Activated CD4-positive, alpha-beta T cell treated with anti-CD3 and anti-CD28 coated beads, Interleukin-2, amount 10 ng/mL, durations not matched to agents 24 days and 14 days (primary cell): ENCODE measurements at regions of chr6 and their contacts with region 1.

Region 1: GRCh38 chr6:75284632-75285286 is at the start of gene TMEM30A:
- DNase-seq: peak; percentile 99
- H3K4me3 Mint-ChIP-seq: no peak within 1 kb of the TSS
- H3K27ac Mint-ChIP-seq: no peak within 1 kb of the TSS
- H3K4me1 Mint-ChIP-seq: peaks cover 29% of the 10 kb centered on the region
- H3K27me3 Mint-ChIP-seq: no peaks in the 10 kb centered on the region
- total RNA-seq, gene TMEM30A: 57.0 and 60.5 TPM in 2 replicates

Region 2: GRCh38 chr6:73580247-73581149 is 1704.3 kb before region 1 on chr6:
- intact Hi-C with region 1: loop called (anchors 5 kb)
- DNase-seq: peak; percentile 87
- H3K4me3 Mint-ChIP-seq: peak overlapping the region; percentile 71
- H3K27ac Mint-ChIP-seq: peak overlapping the region; percentile 99
- H3K4me1 Mint-ChIP-seq: peaks cover 19% of the 10 kb centered on the region
- H3K27me3 Mint-ChIP-seq: no peaks in the 10 kb centered on the region

Region 3: DNA sequence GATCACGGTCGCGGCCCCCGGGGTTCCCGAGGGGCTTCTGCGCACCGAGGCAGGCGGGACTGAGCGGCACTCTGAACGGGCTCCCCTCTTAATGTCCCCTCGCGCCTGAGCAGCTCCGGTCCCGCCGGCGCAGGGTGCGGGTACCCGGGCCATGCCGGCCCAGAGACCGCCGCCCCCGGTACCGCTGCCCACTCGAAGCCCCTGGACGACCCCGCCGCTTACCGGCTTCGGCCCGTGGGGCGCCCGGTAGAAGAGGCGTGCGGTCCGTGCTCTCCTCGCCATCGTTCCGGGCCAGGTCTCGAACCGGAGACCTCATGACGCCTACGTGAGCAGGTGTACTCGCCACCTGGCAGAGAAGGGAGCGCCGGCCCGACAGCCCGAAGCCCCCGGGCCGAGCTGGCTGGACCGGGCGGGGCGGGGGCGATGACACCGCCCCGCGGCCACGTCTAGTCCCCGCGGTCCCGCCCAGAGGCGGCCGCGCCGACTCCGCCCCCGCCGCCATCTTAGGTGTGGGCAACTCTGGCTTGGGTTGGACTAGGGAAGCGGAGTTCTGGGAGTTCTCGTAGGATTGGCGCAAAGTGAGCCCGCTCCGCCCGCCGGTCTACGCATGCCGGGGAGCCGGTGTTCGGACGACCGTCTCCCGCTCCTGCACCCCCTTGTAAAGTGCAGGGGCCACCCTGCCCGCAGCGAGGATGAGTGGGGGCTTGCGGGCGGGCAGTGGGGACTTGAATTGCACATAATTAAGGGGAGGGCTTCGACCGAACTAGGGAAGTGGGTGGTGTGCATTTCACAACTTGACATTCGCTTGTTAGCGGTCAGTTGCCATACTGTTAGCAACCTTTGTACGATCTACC is 1631.0 kb before region 1 on chr6 and contains the start of gene SLC17A5:
- intact Hi-C with region 1: loop called (anchors 5 kb)
- DNase-seq: peak; percentile 96
- H3K4me3 Mint-ChIP-seq: peak within 1 kb of the TSS; percentile 96
- H3K27ac Mint-ChIP-seq: peak within 1 kb of the TSS; percentile 97
- H3K4me1 Mint-ChIP-seq: peaks cover 25% of the 10 kb centered on the region
- H3K27me3 Mint-ChIP-seq: no peaks in the 10 kb centered on the region
- total RNA-seq, gene SLC17A5: 4.9 TPM in 2 replicates

Region 4: DNA sequence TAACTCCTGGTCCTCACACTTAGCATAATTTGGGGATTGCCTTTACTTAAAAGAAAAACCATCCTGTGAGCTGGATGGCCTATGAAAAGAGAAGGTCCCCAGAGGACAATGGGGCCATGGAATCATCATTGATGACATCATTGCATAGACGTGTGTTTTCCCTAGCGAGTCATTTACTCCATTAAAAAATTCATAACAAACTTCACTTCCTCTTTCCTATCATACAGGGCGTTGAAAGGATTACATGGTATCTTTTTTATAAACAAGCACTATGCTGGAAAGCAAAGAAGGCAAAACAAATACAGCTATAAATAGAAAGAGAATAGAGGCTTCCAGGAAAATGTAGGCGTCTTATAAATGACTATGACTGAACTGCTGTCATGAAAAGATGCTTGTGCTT is 67.6 kb before region 1 on chr6:
- intact Hi-C with region 1: no loop called
- DNase-seq: no peak
- H3K4me3 Mint-ChIP-seq: peak overlapping the region; percentile 10
- H3K27ac Mint-ChIP-seq: peak overlapping the region; percentile 72
- H3K4me1 Mint-ChIP-seq: peaks cover 16% of the 10 kb centered on the region
- H3K27me3 Mint-ChIP-seq: peaks cover 19% of the 10 kb centered on the region

Region 5: GRCh38 chr6:75243333-75244062 is 41.3 kb before region 1 on chr6 and contains the start of gene COX7A2:
- intact Hi-C with region 1: loop called (anchors 1 kb)
- DNase-seq: peak; percentile 96
- H3K4me3 Mint-ChIP-seq: peak within 1 kb of the TSS; percentile 94
- H3K27ac Mint-ChIP-seq: peak within 1 kb of the TSS; percentile 95
- H3K4me1 Mint-ChIP-seq: peaks cover 24% of the 10 kb centered on the region
- H3K27me3 Mint-ChIP-seq: peaks cover 15% of the 10 kb centered on the region
- total RNA-seq, gene COX7A2: 490 and 538 TPM in 2 replicates

Region 6: GRCh38 chr6:75266716-75267291 is 18.0 kb before region 1 on chr6:
- intact Hi-C with region 1: loop called (anchors 1 kb)
- DNase-seq: no peak
- H3K4me3 Mint-ChIP-seq: no peak overlapping the region
- H3K27ac Mint-ChIP-seq: no peak overlapping the region
- H3K4me1 Mint-ChIP-seq: peaks cover 27% of the 10 kb centered on the region
- H3K27me3 Mint-ChIP-seq: no peaks in the 10 kb centered on the region

Region 7: GRCh38 chr6:75493400-75494064 is 208.8 kb after region 1 on chr6 and contains the start of gene FILIP1:
- intact Hi-C with region 1: loop called (anchors 1 kb)
- DNase-seq: no peak
- H3K4me3 Mint-ChIP-seq: no peak within 1 kb of the TSS
- H3K27ac Mint-ChIP-seq: no peak within 1 kb of the TSS
- H3K4me1 Mint-ChIP-seq: peaks cover 13% of the 10 kb centered on the region
- H3K27me3 Mint-ChIP-seq: peaks cover 56% of the 10 kb centered on the region
- total RNA-seq, gene FILIP1: not detected in 2 replicates

Region 8: GRCh38 chr6:75601304-75602245 is 316.8 kb after region 1 on chr6 and contains the start of gene SENP6:
- intact Hi-C with region 1: loop called (anchors 2 kb)
- DNase-seq: peak; percentile 91
- H3K4me3 Mint-ChIP-seq: peak within 1 kb of the TSS; percentile 99
- H3K27ac Mint-ChIP-seq: peak within 1 kb of the TSS; percentile 99
- H3K4me1 Mint-ChIP-seq: peaks cover 42% of the 10 kb centered on the region
- H3K27me3 Mint-ChIP-seq: no peaks in the 10 kb centered on the region
- total RNA-seq, gene SENP6: 76.7 and 79.4 TPM in 2 replicates